ENCODE measurements at regions of chr3 and their contacts with region 1.

Region 1: DNA sequence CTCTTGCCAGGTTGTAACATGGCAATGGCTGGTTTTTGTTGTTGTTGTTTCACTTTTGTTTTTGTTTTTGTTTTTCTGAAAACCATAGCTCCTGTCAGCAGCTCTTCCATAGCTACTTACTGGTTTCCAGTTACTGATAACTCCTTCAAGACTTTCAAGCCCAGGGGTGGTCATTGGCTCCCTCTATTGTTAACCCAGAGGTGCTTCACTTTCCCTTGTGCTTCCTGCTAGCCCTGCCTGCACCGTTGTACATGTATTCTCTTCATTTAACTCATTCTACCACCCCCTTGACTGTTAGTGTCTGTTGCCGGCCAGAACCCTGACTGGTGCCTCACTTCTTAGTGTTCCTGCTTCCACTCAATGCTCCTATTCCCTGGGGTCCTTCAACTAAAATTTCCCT is 4.2 kb upstream of the TRAT1 start:
- DNase-seq: peak; percentile 88
- H3K4me3 Mint-ChIP-seq: peak overlapping the region; percentile 60
- H3K27ac Mint-ChIP-seq: peak overlapping the region; percentile 68
- H3K4me1 Mint-ChIP-seq: peaks cover 28% of the 10 kb centered on the region
- H3K27me3 Mint-ChIP-seq: no peaks in the 10 kb centered on the region

Region 2: DNA sequence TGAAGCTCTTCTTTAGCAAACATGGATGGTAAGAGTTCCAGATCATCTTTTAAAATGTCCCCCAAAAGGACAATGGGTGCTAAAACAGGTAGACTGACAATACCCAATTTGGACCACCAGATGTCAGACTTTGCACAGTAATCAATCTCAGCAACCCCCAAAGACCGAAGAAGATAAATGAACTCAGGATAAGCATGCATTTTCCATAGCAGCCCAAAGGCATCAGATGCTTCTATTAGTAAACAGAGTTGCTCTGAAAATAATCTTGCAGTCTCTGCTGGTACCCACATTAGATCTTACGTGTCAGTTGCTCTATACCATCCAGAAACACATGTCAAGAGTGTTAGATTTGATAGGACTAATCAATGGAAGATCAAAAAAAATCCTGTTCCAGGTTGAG is 328.6 kb before region 1 on chr3:
- intact Hi-C with region 1: loop called (anchors 2 kb)
- DNase-seq: peak; percentile 81
- H3K4me3 Mint-ChIP-seq: no peak overlapping the region
- H3K27ac Mint-ChIP-seq: no peak overlapping the region
- H3K4me1 Mint-ChIP-seq: peaks cover 2% of the 10 kb centered on the region
- H3K27me3 Mint-ChIP-seq: peaks cover 13% of the 10 kb centered on the region

Region 3: DNA sequence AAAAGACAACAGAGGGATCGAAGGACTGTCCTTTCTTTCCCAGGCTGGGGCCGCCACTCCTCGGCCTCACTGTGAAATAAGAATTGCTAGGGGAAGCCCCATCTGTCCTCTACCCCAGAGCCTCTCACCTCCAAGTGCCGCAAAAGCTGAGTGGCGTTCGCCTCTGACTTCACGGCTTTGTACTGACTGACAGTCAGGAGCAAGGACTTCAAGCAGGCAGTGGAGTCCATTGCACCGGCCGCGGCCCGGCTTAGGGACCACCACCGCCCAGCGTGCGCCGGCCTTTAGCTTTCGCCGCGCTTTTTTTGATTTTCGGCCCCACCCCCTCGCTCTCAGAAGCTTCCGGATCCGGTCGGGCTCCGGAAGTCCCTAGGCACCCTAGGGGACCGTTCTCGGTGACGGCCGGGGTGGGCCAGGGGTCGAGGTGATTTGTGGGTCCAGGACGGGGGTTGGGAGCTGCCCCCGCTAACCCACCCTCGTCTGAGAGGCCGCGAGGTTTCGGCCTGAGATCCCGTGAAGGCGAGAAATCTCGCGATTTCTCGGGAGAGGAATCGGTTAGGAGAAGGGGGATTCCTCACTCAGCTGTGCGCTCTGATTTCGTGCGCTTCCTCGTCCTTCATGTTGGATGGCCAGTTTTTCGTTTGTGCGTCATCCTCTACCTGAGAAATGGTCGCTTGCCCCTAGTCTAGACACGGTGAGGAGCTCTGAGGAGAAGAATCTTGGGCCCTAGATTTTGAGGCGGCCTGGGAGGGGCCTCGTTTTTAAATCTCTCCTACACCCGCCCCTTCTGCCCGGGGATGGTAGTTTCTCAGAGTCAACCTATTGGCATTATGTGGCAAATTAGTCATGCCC is 229.0 kb before region 1 on chr3 and contains the starts of genes CIP2A and DZIP3:
- intact Hi-C with region 1: loop called (anchors 1 kb)
- DNase-seq: peak; percentile 95
- H3K4me3 Mint-ChIP-seq: peak within 1 kb of the TSS; percentile 97
- H3K27ac Mint-ChIP-seq: peak within 1 kb of the TSS; percentile 98
- H3K4me1 Mint-ChIP-seq: peaks cover 45% of the 10 kb centered on the region
- H3K27me3 Mint-ChIP-seq: no peaks in the 10 kb centered on the region
- total RNA-seq, gene CIP2A: 48.3 and 58.3 TPM in 2 replicates
- total RNA-seq, gene DZIP3: 4.1 and 4.7 TPM in 2 replicates

Region 4: DNA sequence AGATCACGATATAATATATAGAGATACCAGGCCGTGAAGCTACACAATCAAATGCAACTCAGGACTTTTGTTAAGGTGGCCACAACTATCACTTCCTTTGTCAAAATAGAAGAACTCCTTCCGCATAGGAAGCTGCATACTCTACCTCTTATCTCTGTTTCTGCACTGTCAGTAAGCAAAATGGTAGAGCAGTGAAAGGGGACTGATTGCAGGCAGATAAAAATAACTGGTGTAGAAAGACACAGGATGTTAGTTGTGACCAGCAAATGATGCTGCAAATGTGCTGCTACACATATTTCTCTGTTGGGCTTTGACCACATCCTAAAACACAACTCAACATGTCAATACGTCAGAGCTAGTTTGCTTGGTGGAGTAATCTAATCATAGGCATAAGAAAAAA is 12.1 kb before region 1 on chr3:
- intact Hi-C with region 1: loop called (anchors 1 kb)
- DNase-seq: peak; percentile 86
- H3K4me3 Mint-ChIP-seq: peak overlapping the region; percentile 28
- H3K27ac Mint-ChIP-seq: peak overlapping the region; percentile 76
- H3K4me1 Mint-ChIP-seq: peaks cover 15% of the 10 kb centered on the region
- H3K27me3 Mint-ChIP-seq: peaks cover 3% of the 10 kb centered on the region

Region 5: GRCh38 chr3:108862865-108863798 is 44.7 kb after region 1 on chr3:
- intact Hi-C with region 1: loop called (anchors 5 kb)
- DNase-seq: peak; percentile 69
- H3K4me3 Mint-ChIP-seq: peak overlapping the region; percentile 63
- H3K27ac Mint-ChIP-seq: peak overlapping the region; percentile 99
- H3K4me1 Mint-ChIP-seq: peaks cover 42% of the 10 kb centered on the region
- H3K27me3 Mint-ChIP-seq: no peaks in the 10 kb centered on the region

Measured in activated CD4-positive, alpha-beta T cell treated with anti-CD3 and anti-CD28 coated beads, Interleukin-2, amount 10 ng/mL, durations not matched to agents 24 days and 14 days (primary cell).